ENCODE measurements at regions of chr4 and their contacts with region 1.

Region 1: GRCh38 chr4:38132107-38132673 is 172.0 kb downstream of the PTTG2 start:
- DNase-seq: peak; percentile 13 to 78 (median 67)
- ATAC-seq: peak; percentile 78
- H3K4me3 ChIP-seq: peak overlapping the region; percentile 10
- H3K4me3 Mint-ChIP-seq: peak overlapping the region in 9 of 10 donors; percentile 23 to 78 (median 75)
- H3K27ac ChIP-seq: peak overlapping the region; percentile 21
- H3K27ac Mint-ChIP-seq: peak overlapping the region; percentile 87 to 97 (median 90)
- H3K4me1 ChIP-seq: peaks cover 37 to 56% of the 10 kb centered on the region in 2 donors
- H3K4me1 Mint-ChIP-seq: peaks cover 37 to 73% (median 57%) of the 10 kb centered on the region in 7 donors
- H3K27me3 ChIP-seq: no peaks in the 10 kb centered on the region
- H3K27me3 Mint-ChIP-seq: peaks cover 0 to 2% (median 0%) of the 10 kb centered on the region in 5 donors

Region 2: DNA sequence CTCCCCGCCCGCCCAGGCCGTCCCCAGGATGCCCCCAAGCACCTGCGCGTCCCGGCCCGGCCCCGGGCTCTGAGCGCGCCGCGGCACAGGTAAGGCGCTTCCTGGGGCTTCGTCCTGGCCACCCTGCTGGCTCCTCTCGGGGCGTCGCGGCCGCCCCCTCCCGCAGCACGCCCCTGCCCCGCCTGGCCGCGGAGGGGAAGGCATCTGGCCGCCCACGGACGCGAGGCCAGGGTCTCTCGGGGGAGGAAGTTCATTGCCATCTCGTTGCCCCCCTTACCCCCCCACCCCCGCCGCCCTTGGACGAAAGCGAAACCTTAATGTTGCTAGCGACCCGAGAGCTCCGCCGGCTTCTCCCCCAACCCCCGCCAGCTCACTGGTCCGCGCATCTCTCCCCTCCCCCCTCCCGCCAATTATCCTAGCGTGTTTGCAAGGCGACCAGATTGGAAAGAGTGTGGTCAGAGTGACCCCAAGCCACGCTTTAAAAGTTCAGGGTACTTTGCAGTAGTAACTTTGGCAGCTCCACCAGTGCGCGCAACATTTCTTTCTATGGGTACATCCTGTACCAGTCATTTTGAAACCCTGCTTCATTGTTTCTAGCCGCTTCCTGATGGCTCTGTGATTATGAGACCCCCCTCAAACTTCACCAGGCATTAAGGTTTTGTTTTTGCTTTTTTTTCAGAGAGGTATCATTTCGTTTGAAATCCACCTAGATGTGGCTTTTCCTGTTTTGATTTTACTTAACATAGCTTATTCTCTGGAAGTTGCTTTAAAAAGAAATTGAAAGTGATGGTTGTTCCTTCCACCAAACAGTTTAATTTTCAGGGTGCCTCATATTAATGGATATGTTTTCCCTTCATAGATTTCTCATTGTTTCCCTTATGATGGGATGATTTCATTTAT is 240.7 kb before region 1 on chr4:
- CTCF ChIA-PET with region 1: no interaction called
- POLR2A ChIA-PET with region 1: no interaction called
- intact Hi-C with region 1: loop called in 1 of 2 experiments (anchors 1 kb)
- DNase-seq: peak; percentile 37 to 70 (median 58)
- ATAC-seq: peak; percentile 68
- H3K4me3 ChIP-seq: peak overlapping the region; percentile 51
- H3K4me3 Mint-ChIP-seq: peak overlapping the region; percentile 88 to 100 (median 96)
- H3K27ac ChIP-seq: peak overlapping the region; percentile 69
- H3K27ac Mint-ChIP-seq: peak overlapping the region; percentile 86 to 97 (median 92)
- H3K4me1 ChIP-seq: peaks cover 10 to 25% of the 10 kb centered on the region in 2 donors
- H3K4me1 Mint-ChIP-seq: peaks cover 28 to 66% (median 55%) of the 10 kb centered on the region in 7 donors
- H3K27me3 ChIP-seq: no peaks in the 10 kb centered on the region
- H3K27me3 Mint-ChIP-seq: peaks cover 0 to 5% (median 0%) of the 10 kb centered on the region in 5 donors

Region 3: GRCh38 chr4:38154681-38155608 is 22.8 kb after region 1 on chr4:
- CTCF ChIA-PET with region 1: no interaction called
- POLR2A ChIA-PET with region 1: interaction called, 3 read pairs
- intact Hi-C with region 1: loop called in 1 of 2 experiments (anchors 1 kb)
- DNase-seq: no peak
- ATAC-seq: peak; percentile 57
- H3K4me3 ChIP-seq: no peak overlapping the region
- H3K4me3 Mint-ChIP-seq: peak overlapping the region in 9 of 10 donors; percentile 33 to 65 (median 53)
- H3K27ac ChIP-seq: no peak overlapping the region
- H3K27ac Mint-ChIP-seq: peak overlapping the region in 7 of 9 donors; percentile 38 to 71 (median 48)
- H3K4me1 ChIP-seq: peaks cover 10 to 25% of the 10 kb centered on the region in 2 donors
- H3K4me1 Mint-ChIP-seq: peaks cover 23 to 67% (median 52%) of the 10 kb centered on the region in 7 donors
- H3K27me3 ChIP-seq: no peaks in the 10 kb centered on the region
- H3K27me3 Mint-ChIP-seq: peaks cover 0 to 15% (median 0%) of the 10 kb centered on the region in 5 donors

Region 4: DNA sequence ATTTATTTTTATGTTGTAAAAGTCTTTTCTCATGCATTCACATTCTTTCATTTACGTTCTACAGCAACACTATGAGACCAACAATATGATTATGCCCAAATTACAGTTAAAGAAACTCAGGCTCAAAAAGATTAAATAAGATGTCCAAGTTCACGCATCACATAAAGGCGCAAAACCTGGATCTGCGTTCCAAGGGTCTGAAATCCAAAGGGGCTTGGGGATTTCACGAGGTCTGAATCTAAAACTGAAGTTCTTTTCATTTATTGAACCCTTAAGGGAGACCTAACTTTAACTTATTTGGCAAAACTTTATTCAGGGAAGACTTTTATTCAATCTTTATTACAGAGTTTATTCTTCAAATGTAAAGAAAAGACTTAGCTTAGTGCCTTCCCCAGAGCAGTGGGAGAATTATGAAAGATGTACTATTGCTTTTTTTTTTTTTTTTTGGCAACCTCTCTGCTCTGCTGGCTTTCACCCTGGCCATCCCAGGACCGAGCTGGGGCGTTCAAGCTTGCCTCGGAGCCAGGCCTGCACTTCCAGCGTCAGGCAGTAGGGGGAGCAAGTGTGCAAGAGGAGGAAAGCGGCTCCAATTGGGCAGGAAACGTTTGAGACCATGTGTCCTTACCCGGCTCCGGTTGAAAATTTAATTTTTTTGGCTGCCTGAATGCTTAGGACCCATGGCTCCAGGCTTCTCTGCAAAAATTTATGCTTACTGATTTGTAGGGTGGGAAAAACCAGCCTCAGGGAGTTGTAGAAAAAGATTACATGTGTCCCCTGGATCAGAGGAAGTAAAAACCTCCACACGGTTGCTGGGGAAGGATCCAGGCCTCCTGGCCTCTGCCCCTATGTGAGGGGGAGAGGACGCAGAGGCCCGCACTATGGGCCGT is 187.5 kb after region 1 on chr4:
- CTCF ChIA-PET with region 1: no interaction called
- POLR2A ChIA-PET with region 1: no interaction called
- intact Hi-C with region 1: loop called (anchors 2 kb)
- DNase-seq: peak; percentile 73 to 96 (median 83)
- ATAC-seq: peak; percentile 91
- H3K4me3 ChIP-seq: peak overlapping the region; percentile 38
- H3K4me3 Mint-ChIP-seq: peak overlapping the region; percentile 80 to 95 (median 88)
- H3K27ac ChIP-seq: peak overlapping the region; percentile 68
- H3K27ac Mint-ChIP-seq: peak overlapping the region; percentile 87 to 98 (median 94)
- H3K4me1 ChIP-seq: peaks cover 19 to 35% of the 10 kb centered on the region in 2 donors
- H3K4me1 Mint-ChIP-seq: peaks cover 33 to 75% (median 70%) of the 10 kb centered on the region in 7 donors
- H3K27me3 ChIP-seq: no peaks in the 10 kb centered on the region
- H3K27me3 Mint-ChIP-seq: peaks cover 0 to 10% (median 0%) of the 10 kb centered on the region in 5 donors

Region 5: GRCh38 chr4:38675146-38676121 is 543.2 kb after region 1 on chr4:
- CTCF ChIA-PET with region 1: no interaction called
- POLR2A ChIA-PET with region 1: no interaction called
- intact Hi-C with region 1: loop called in 1 of 2 experiments (anchors 5 kb)
- DNase-seq: peak; percentile 57 to 85 (median 81)
- ATAC-seq: peak; percentile 75
- H3K4me3 ChIP-seq: peak overlapping the region; percentile 25
- H3K4me3 Mint-ChIP-seq: peak overlapping the region; percentile 48 to 99 (median 81)
- H3K27ac ChIP-seq: peak overlapping the region; percentile 98
- H3K27ac Mint-ChIP-seq: peak overlapping the region in 8 of 9 donors; percentile 82 to 100 (median 94)
- H3K4me1 ChIP-seq: peaks cover 45 to 70% of the 10 kb centered on the region in 2 donors
- H3K4me1 Mint-ChIP-seq: peaks cover 61 to 97% (median 90%) of the 10 kb centered on the region in 7 donors
- H3K27me3 ChIP-seq: no peaks in the 10 kb centered on the region
- H3K27me3 Mint-ChIP-seq: peaks cover 0 to 3% (median 0%) of the 10 kb centered on the region in 5 donors

Region 6: DNA sequence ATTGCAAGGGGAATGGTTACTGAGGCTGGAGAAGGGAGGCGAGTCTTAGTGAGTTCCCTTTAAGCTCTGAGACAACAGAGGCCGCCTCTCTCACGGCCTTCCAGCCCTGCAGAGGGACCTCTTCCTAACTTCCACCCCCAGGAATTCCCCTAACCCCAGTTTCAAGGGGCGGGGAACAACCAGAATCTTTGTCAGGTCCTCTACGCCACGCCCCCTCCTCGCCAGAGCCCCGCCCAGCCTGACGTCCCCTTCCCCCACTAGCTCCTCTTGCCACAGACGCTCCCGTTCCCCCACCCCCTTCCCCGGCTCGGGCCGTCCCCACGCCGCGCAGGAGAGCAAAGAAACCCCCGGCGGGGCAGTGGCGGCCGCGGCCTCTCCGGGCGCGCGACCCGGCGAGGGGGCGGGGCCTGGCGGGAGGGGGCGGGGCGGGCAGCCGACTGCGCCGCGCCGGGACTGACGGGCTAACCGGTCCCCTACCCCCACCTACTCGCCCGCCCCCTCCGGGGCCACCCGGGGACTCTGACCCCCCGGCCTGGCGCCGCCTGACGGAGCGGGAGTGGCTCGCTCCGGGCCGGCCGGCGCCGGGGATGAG is 912.3 kb after region 1 on chr4:
- CTCF ChIA-PET with region 1: no interaction called
- POLR2A ChIA-PET with region 1: no interaction called
- intact Hi-C with region 1: loop called in 1 of 2 experiments (anchors 5 kb)
- DNase-seq: peak; percentile 82 to 98 (median 89)
- ATAC-seq: peak; percentile 92
- H3K4me3 ChIP-seq: peak overlapping the region; percentile 68
- H3K4me3 Mint-ChIP-seq: peak overlapping the region; percentile 86 to 97 (median 91)
- H3K27ac ChIP-seq: peak overlapping the region; percentile 82
- H3K27ac Mint-ChIP-seq: peak overlapping the region; percentile 66 to 99 (median 93)
- H3K4me1 ChIP-seq: peaks cover 28 to 32% of the 10 kb centered on the region in 2 donors
- H3K4me1 Mint-ChIP-seq: peaks cover 17 to 63% (median 55%) of the 10 kb centered on the region in 7 donors
- H3K27me3 ChIP-seq: no peaks in the 10 kb centered on the region
- H3K27me3 Mint-ChIP-seq: no peaks in the 10 kb centered on the region

Measured in naive thymus-derived CD4-positive, alpha-beta T cell (primary cell).